ENCODE measurements at regions of chr3 and their contacts with region 1.

Region 1: GRCh38 chr3:107506458-107506857 is 16.3 kb upstream of the BBX start:
- DNase-seq: no peak
- H3K4me3 ChIP-seq: no peak overlapping the region
- H3K27ac ChIP-seq: no peak overlapping the region
- H3K4me1 ChIP-seq: no peaks in the 10 kb centered on the region
- H3K27me3 ChIP-seq: no peaks in the 10 kb centered on the region
- CTCF ChIP-seq: no peak
- POLR2A ChIP-seq: no peak

Region 2: DNA sequence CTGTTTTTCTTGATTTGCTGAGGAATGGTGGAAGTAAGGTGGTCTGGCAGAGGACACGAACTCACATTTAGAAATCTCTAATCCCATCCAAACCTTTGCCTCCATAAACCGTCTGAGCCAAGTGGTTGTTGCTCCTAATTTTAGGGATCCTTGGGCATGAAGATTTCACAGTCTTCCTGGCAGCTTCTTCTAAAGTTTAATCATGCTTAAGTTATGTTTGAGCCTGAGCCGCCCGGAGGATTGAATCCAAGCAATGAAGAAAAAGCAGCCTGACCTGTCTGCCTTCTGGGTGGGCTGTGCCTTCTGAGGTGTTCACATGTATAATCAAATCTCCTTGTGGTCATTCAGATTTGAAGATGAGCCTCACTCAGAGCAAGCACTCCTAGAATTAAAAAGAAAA is 335.4 kb after region 1 on chr3:
- intact Hi-C with region 1: loop called (anchors 5 kb)
- DNase-seq: peak in 1 of 2 donors; percentile 26
- H3K4me3 ChIP-seq: no peak overlapping the region
- H3K27ac ChIP-seq: no peak overlapping the region
- H3K4me1 ChIP-seq: no peaks in the 10 kb centered on the region
- H3K27me3 ChIP-seq: no peaks in the 10 kb centered on the region
- CTCF ChIP-seq: no peak
- POLR2A ChIP-seq: no peak

Measured in breast epithelium (tissue), 4 donors.